ENCODE measurements at regions of chr3 and their contacts with region 1.

Region 1: DNA sequence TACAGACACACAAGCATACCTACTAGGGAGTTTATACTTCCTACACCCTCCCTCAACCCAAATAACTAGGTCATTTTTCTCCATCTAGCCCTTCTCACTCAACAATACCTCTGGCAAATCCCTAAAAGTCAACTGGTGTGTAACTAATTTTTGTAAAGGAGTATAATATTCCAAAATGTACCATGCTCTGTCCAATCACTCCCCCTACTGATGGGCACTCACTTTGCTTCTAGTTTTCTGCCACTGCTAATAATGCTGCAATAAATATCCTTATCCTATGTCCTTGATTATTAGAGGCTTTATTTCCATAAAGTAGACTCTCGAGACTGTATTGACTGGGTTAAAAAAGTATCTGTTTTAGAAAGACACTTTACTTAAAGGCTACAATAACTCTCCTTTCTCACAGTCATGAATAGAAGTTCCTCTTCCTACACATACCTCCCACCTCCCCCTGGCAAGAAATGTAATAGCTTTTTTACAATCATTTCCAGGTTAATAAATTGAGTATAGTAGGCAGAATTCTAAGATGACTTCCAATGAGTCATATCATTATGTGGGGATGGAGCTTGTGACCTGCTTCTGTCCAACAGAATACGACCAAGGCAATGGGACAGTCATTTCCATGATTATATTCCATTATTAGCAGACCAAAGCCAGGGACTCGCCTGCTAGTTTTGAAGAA is 30.0 kb downstream of the SHQ1 start:
- DNase-seq: peak in 2 of 4 donors; percentile 25 to 26
- ATAC-seq: no peak
- H3K4me3 ChIP-seq: no peak overlapping the region
- H3K27ac ChIP-seq: peak overlapping the region in 1 of 4 donors; percentile 7
- H3K4me1 ChIP-seq: peaks cover 46% of the 10 kb centered on the region
- H3K27me3 ChIP-seq: no peaks in the 10 kb centered on the region
- CTCF ChIP-seq: peak; percentile 19 to 79 (median 58)
- POLR2A ChIP-seq: no peak

Region 2: GRCh38 chr3:71955240-71956068 is 862.8 kb before region 1 on chr3:
- intact Hi-C with region 1: loop called (anchors 5 kb)
- DNase-seq: peak; percentile 78 to 83 (median 79)
- ATAC-seq: peak; percentile 53
- H3K4me3 ChIP-seq: no peak overlapping the region
- H3K27ac ChIP-seq: no peak overlapping the region
- H3K4me1 ChIP-seq: peaks cover 6% of the 10 kb centered on the region
- H3K27me3 ChIP-seq: no peaks in the 10 kb centered on the region
- CTCF ChIP-seq: peak; percentile 26 to 80 (median 72)
- POLR2A ChIP-seq: no peak

Measured in body of pancreas (tissue), 4 donors.